Dendritic cell treated with granulocyte-macrophage colony-stimulating factor and Interleukin-4, amounts not matched to agents 40 ng/mL and 50 ng/mL, for 4 days (primary cell): ENCODE measurements at regions of chr7 and their contacts with region 1.

Region 1: GRCh38 chr7:107563775-107564552 is at the starts of genes COG5 and DUS4L:
- H3K4me3 Mint-ChIP-seq: peak within 1 kb of the TSS; percentile 93
- H3K27ac Mint-ChIP-seq: peak within 1 kb of the TSS; percentile 93
- H3K4me1 Mint-ChIP-seq: peaks cover 56% of the 10 kb centered on the region
- H3K27me3 Mint-ChIP-seq: no peaks in the 10 kb centered on the region

Region 2: GRCh38 chr7:107506613-107507339 is 57.2 kb before region 1 on chr7:
- intact Hi-C with region 1: no loop called
- H3K4me3 Mint-ChIP-seq: no peak overlapping the region
- H3K27ac Mint-ChIP-seq: peak overlapping the region; percentile 55
- H3K4me1 Mint-ChIP-seq: peaks cover 24% of the 10 kb centered on the region
- H3K27me3 Mint-ChIP-seq: no peaks in the 10 kb centered on the region

Region 3: DNA sequence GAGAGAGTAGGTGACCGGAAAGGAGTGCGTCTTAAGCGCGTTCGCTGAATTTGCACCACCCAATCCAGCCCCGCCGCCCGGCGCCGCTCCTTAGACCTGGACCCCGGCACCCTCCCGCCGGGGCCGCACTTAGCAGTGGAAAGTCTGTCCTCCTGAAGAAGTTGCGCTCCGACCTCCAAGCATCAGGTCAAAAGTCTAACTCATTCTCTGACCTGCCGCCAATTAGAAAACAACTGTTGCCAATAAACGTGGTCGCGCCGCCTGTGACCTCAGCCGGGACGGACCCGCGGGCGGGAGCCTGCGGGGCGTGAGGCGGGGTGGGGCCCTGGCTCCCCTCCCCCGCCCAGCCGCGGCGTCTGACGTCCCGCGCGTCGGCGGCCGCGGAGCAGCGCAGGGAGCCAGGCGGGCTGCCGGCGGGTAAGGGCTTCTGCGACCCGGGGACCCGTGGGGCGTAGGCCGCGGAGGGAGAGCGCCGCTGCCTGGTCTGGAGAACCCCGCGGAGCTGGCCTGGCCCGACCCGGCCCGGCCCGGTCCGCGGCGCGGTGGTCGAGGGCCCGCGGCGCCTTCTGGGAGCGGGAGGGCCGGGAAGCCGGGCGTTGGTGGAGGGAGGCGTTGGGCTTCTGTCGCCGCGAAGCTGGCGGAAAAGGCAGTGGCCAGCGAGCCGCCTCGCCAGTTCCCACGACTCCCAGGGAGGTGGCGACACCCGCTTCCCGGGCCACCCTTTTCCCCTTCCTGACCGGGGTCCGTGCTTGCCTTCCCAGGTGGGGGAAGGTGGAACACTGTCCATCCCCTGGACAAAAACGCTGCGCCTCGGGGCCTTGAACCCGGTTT is 16.1 kb after region 1 on chr7 and contains the start of gene BCAP29:
- intact Hi-C with region 1: loop called (anchors 1 kb)
- H3K4me3 Mint-ChIP-seq: peak within 1 kb of the TSS; percentile 86
- H3K27ac Mint-ChIP-seq: peak within 1 kb of the TSS; percentile 88
- H3K4me1 Mint-ChIP-seq: peaks cover 11% of the 10 kb centered on the region
- H3K27me3 Mint-ChIP-seq: no peaks in the 10 kb centered on the region

Region 4: GRCh38 chr7:107614425-107614824 is 50.5 kb after region 1 on chr7:
- intact Hi-C with region 1: no loop called
- H3K4me3 Mint-ChIP-seq: no peak overlapping the region
- H3K27ac Mint-ChIP-seq: no peak overlapping the region
- H3K4me1 Mint-ChIP-seq: no peaks in the 10 kb centered on the region
- H3K27me3 Mint-ChIP-seq: no peaks in the 10 kb centered on the region

Region 5: DNA sequence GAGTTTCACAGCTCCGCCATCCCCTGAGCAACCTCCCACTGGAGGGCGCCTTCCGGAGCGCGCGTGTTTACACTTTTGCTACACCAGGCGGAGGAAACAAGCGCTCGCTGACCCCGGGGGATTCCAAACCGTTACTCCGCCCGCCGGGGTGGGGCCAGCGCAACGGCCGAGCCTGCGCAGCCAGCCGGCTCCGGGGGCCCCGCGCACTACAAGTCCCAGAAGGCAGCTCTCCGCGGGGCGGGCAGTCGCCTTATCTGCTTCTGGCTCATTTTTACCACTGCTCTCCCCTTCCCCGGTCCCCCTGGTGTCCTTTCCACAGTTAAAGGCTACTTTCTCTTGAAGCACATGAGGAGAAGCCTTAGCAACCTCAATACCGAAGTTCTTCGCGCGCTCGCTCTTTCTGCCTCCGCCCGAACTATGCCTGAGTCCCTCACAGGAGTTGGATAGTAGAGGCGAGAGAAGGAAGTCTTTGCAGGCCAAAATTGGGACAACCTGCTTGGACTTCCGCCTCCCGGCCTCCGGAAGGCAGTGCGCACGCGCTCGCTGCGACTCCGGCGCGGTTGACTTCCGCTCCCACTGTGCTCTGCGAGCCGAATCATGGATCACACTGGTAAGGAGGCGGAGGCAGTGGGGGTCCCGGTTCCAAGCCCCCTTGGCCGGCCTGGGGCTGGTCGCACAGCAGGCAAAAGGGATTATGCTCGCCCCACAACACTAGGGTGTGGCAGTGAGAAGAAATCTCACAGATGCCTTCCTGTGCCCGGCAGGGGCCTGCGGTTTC is 179.8 kb after region 1 on chr7 and contains the start of gene CBLL1:
- intact Hi-C with region 1: loop called (anchors 5 kb)
- H3K4me3 Mint-ChIP-seq: peak within 1 kb of the TSS; percentile 97
- H3K27ac Mint-ChIP-seq: peak within 1 kb of the TSS; percentile 99
- H3K4me1 Mint-ChIP-seq: peaks cover 22% of the 10 kb centered on the region
- H3K27me3 Mint-ChIP-seq: no peaks in the 10 kb centered on the region

Region 6: DNA sequence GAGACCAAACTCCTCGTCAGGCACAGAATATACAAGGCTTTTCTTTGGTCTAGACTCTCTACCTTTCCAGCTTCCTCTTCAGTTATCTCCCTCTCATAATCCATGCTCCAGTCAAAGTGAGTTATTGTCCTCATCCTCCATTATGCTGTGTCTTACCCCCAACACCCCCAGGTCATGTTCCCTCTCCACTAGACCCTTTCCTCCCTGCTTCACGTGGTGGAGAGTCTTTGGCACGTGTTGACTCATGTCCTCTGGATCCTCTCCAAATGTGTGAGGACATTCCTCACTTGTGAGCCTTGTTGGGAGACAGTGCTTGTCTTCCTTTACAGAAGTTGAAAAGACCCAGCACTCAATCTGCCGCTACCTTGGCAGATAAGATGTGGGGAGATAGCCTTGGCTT is 291.0 kb after region 1 on chr7:
- intact Hi-C with region 1: no loop called
- H3K4me3 Mint-ChIP-seq: no peak overlapping the region
- H3K27ac Mint-ChIP-seq: no peak overlapping the region
- H3K4me1 Mint-ChIP-seq: no peaks in the 10 kb centered on the region
- H3K27me3 Mint-ChIP-seq: no peaks in the 10 kb centered on the region